GM18951 (cell line): ENCODE measurements at regions of chr20 and their contacts with region 1.

Region 1: GRCh38 chr20:38875175-38875993 is 50.8 kb upstream of the FAM83D start:
- POLR2A ChIP-seq: peak; percentile 32

Region 2: GRCh38 chr20:38805502-38805957 is 69.9 kb before region 1 on chr20 and contains the start of gene PPP1R16B:
- in situ Hi-C with region 1: loop called (anchors 10 kb)
- POLR2A ChIP-seq: peak; percentile 97